K562 (cell line): ENCODE measurements at regions of chr2 and their contacts with region 1.

Region 1: DNA sequence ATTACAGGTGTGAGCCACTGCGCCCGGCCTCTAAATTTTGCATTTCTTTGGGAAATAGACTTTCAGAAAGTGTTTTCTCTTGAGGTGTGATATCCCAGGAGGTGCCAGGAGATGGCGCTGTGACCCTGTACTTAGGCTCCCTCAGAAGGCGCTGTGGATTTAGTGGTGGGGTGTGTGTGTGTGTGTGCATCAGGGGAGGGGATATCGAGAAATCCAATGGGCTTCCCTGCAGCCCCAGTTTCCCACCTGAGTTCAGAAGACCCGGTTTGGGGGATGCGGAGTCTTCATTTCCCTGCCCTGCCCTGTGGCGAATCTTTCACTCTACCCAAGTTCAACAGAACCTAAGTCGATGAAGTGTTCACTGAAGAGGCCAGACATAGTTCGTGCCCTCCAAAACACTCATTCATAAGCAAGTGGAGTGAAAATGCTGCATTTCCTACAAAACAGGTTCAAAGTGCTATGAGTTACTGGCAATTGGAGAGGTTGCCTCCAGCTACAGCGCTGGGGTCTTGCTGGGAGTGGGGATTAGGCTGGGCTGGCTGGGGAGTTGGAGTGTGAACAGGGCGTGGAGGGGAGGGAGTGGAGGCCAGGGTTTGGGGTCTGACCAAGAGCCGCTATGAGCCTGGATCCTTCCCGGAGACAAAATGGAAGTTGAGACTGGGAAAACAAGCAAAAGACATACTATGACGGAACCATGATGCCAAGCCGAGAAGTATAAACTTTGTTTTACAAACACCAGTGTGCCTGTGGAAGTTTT is 6.5 kb upstream of the WNT6 start:
- DNase-seq: peak; percentile 50 to 68 (median 52)
- ATAC-seq: peak; percentile 86
- H3K4me3 ChIP-seq: no peak overlapping the region
- H3K27ac ChIP-seq: no peak overlapping the region
- H3K4me1 ChIP-seq: no peaks in the 10 kb centered on the region; a peak in 1 of 5 replicates
- H3K27me3 ChIP-seq: peaks cover 0 to 27% of the 10 kb centered on the region in 2 experiments; a peak in 2 of 5 replicates
- CTCF ChIP-seq: peak; percentile 74 to 89 (median 81)
- EP300 ChIP-seq: no peak
- POLR2A ChIP-seq: no peak
- RAD21 ChIP-seq: peak; percentile 78

Region 2: GRCh38 chr2:218168635-218169462 is 684.2 kb before region 1 on chr2:
- CTCF ChIA-PET with region 1: no interaction called
- POLR2A ChIA-PET with region 1: no interaction called
- in situ Hi-C with region 1: no loop called
- intact Hi-C with region 1: loop called (anchors 5 kb)
- DNase-seq: peak; percentile 62 to 69 (median 66)
- ATAC-seq: peak; percentile 95
- H3K4me3 ChIP-seq: no peak overlapping the region
- H3K27ac ChIP-seq: no peak overlapping the region
- H3K4me1 ChIP-seq: no peaks in the 10 kb centered on the region; a peak in 2 of 5 replicates
- H3K27me3 ChIP-seq: peaks cover 11 to 17% of the 10 kb centered on the region in 2 experiments; a peak in 4 of 5 replicates
- CTCF ChIP-seq: peak; percentile 69 to 79 (median 70)
- EP300 ChIP-seq: no peak
- POLR2A ChIP-seq: no peak
- RAD21 ChIP-seq: peak; percentile 23 to 58

Region 3: DNA sequence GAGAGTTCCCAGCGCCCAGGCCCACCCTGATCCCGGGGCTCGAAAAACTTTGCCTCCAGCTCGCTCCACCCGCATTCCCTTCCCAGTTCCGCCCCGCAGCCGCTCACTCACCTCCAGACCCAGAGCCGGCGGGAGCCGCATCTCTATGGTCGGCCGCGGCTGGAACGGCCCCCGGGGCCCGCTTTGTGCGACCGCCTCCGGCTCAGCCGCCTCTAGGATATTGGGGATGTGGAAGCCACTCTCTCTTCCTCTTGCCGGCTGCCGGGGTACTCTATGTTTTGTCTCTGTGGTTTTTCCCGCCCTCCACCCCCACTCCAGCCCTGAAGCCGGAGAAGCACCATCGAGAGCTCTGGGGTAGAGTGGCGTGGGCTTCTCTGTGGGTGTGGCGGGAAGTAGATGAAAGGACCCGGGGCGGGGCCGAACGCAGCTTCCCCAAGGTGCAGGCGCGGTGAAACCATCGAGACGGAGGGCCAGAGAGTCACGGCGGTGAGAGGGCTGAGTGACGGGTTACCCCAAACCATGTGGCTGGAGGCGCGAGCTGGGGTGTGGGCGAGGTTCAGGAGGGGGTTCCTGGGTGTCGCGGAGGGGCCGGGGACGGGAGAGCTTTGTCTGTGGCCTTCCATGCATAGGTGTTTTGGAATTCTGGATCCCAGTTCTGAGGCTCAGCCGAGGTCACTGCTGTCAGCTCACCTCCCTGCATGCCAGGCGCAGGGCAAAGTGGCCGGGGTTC is 193.7 kb before region 1 on chr2 and contains the starts of genes BCS1L and ZNF142:
- CTCF ChIA-PET with region 1: interaction called, 32 read pairs
- POLR2A ChIA-PET with region 1: interaction called, 6 read pairs
- in situ Hi-C with region 1: no loop called
- intact Hi-C with region 1: no loop called
- DNase-seq: peak; percentile 87 to 94 (median 88)
- ATAC-seq: peak; percentile 97
- H3K4me3 ChIP-seq: peak within 1 kb of the TSS; percentile 61
- H3K27ac ChIP-seq: peak within 1 kb of the TSS; percentile 73
- H3K4me1 ChIP-seq: peaks cover 6 to 17% of the 10 kb centered on the region in 2 experiments; a peak in 3 of 5 replicates
- H3K27me3 ChIP-seq: no peaks in the 10 kb centered on the region
- CTCF ChIP-seq: no peak
- EP300 ChIP-seq: 0 out of 2 replicates have a peak, but pooled peaks have one; percentile 26
- POLR2A ChIP-seq: peak; percentile 81
- RAD21 ChIP-seq: no peak
- polyA plus RNA-seq, gene BCS1L: 83.2 to 103 TPM
- polyA plus RNA-seq, gene ZNF142: 0.50 to 1.3 TPM

Region 4: DNA sequence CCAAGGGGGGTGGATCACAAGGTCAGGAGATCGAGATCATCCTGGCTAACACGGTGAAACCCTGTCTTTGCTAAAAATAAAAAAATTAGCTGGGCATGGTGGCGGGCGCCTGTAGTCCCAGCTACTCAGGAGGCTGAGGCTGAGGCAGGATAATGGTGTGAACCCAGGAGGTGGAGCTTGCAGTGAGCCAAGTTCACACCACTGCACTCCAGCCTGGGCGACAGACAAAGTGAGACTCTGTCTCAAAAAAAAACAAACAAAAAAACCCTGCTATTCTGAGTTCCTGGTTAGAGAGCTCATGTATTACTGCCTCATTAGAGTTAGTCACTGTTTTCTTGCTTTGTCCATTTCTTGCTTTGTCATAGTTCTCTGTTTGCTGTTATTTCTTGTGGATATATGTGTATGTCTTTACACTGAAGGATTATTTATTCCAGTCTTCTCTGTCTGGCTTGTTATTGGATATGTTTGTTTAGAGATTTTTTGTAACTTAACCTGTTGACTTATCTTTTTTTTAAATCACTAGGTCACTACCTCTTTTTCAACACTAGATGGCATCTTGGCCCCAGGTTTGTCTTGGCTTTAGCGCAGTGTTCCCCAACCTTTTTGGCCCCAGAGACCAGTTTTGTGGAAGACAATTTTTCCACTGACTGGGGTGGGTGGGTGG is 125.5 kb before region 1 on chr2:
- CTCF ChIA-PET with region 1: interaction called, 19 read pairs
- POLR2A ChIA-PET with region 1: interaction called, 4 read pairs
- in situ Hi-C with region 1: loop called (anchors 10 kb)
- intact Hi-C with region 1: no loop called
- DNase-seq: peak in 1 of 4 experiments; percentile 34
- ATAC-seq: peak; percentile 55
- H3K4me3 ChIP-seq: no peak overlapping the region
- H3K27ac ChIP-seq: no peak overlapping the region
- H3K4me1 ChIP-seq: peaks cover 0 to 15% of the 10 kb centered on the region in 2 experiments; a peak in 3 of 5 replicates
- H3K27me3 ChIP-seq: no peaks in the 10 kb centered on the region
- CTCF ChIP-seq: peak; percentile 25 to 67 (median 61); a peak in 3 of 6 replicates
- EP300 ChIP-seq: no peak
- POLR2A ChIP-seq: no peak
- RAD21 ChIP-seq: peak in 1 of 2 experiments; percentile 61; a peak in 3 of 4 replicates

Region 5: DNA sequence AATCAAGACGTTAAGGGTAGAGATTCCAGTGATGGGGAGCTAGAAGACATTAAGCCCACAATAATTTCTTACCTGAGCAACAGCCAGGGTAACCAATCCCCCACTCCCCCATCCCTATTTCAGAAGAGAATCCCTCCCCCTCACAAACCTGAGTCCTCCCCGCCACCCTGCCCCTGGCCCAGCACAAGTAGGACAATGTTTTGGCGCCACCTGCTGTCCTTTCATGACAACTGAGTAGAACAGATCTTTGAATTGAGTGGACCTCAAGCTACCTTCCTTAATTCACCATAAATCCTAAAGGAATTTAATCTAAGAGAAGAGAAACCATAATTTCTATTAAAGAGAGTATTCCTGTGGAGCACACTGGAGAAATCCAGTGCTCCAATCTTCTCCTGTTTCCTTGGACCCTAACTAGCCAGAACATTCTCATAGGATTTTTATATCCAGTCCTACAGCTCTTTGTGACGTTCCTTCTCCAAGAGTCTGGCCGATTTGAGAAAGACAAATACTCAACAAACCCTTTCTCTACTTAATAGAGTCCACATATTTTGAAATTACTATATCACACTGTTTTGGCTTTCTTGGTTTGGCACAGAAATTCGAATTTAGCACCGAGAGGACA is 266.4 kb after region 1 on chr2:
- CTCF ChIA-PET with region 1: no interaction called
- POLR2A ChIA-PET with region 1: no interaction called
- in situ Hi-C with region 1: loop called (anchors 10 kb)
- intact Hi-C with region 1: no loop called
- DNase-seq: peak; percentile 50 to 75 (median 54)
- ATAC-seq: peak; percentile 91
- H3K4me3 ChIP-seq: no peak overlapping the region
- H3K27ac ChIP-seq: no peak overlapping the region
- H3K4me1 ChIP-seq: peaks cover 4 to 8% of the 10 kb centered on the region in 2 experiments
- H3K27me3 ChIP-seq: no peaks in the 10 kb centered on the region
- CTCF ChIP-seq: peak; percentile 61 to 72 (median 66)
- EP300 ChIP-seq: no peak
- POLR2A ChIP-seq: no peak
- RAD21 ChIP-seq: peak; percentile 65 to 74